ENCODE measurements at regions of chr12 and their contacts with region 1.

Region 1: DNA sequence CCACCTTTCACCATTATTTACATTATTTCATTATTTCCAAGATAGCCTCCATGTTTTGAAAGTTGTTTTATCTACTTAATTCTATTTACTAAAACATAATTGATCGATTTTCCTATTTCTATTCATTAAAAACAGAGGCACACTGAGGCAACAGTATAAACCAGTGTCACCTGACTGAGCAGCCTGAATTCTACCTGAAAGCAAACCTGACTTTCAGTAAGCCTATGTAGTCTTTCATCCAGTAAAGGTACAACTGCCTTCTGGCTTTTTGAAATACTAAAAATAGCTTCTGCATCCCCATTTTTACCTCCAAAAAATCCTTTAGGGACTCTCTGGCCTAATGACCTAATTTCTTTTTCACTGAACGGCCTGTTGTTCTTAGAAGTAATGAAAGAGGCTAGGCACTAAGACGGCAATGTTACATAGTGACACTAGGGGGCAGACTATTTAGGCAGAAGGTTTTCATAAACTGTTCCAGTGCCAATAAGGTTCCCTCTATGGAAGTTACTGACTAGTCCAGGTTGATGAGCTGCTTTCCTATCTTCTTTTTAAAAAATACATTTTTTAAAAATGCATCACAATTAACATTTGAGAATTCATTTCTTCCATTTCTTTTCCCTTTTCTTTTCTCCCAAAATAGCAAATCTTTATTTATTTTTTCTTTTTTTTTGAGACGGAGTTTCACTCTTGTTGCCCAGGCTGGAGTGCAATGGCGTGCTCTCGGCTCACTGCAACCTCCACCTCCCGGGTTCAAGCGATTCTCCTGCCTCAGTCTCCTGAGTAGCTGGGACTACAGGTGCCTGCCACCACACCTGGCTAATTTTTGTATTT is 17.5 kb downstream of the ANAPC5 start:
- DNase-seq: peak; percentile 80
- H3K4me3 Mint-ChIP-seq: no peak overlapping the region
- H3K27ac Mint-ChIP-seq: peak overlapping the region; percentile 51
- H3K4me1 Mint-ChIP-seq: peaks cover 3% of the 10 kb centered on the region
- H3K27me3 Mint-ChIP-seq: no peaks in the 10 kb centered on the region

Region 2: DNA sequence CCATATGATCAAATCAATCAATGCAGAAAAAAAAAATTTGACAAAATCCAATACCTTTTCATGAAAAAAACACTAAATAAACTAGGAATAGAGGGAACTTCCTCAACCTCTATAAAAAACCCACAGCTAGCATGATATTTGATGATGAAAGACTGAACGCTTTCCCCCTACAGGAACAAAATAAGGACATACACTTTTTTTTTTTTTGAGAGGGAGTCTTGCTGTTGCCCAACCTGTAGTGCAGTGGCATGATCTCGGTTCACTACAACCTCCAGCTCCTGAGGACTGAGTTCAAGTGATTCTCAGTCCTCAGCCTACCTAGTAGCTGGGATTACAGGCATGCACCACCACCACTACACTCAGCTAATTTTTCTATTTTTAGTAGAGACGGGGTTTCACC is 20.3 kb before region 1 on chr12:
- intact Hi-C with region 1: no loop called
- DNase-seq: no peak
- H3K4me3 Mint-ChIP-seq: no peak overlapping the region
- H3K27ac Mint-ChIP-seq: no peak overlapping the region
- H3K4me1 Mint-ChIP-seq: peaks cover 14% of the 10 kb centered on the region
- H3K27me3 Mint-ChIP-seq: no peaks in the 10 kb centered on the region

Region 3: DNA sequence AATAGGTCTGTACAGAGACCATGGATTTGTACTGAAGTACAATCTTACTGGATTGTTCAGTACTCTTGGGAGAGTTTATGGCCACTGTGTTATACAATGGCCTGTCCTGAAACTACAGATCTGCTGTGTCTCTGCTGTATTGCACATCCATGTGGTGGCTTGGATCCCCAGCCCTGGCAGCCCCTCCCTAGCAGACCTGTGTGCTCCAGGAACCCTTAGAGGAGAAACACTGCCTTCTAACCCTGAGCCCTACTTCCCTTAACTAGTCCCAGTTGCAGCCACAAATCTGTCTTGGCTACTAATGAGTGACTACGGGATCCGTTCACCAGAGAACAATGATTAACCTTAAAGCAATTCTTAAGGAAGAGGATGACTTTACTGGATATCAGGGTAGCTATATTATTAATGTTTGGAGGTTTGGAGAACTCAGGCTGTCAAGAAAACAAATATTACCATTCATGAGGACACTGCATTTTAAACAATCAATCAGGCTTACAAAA is 92.9 kb after region 1 on chr12:
- intact Hi-C with region 1: loop called (anchors 5 kb)
- DNase-seq: no peak
- H3K4me3 Mint-ChIP-seq: no peak overlapping the region
- H3K27ac Mint-ChIP-seq: no peak overlapping the region
- H3K4me1 Mint-ChIP-seq: no peaks in the 10 kb centered on the region
- H3K27me3 Mint-ChIP-seq: no peaks in the 10 kb centered on the region

Region 4: GRCh38 chr12:121443193-121443870 is 108.6 kb after region 1 on chr12:
- intact Hi-C with region 1: loop called (anchors 1 kb)
- DNase-seq: peak; percentile 89
- H3K4me3 Mint-ChIP-seq: no peak overlapping the region
- H3K27ac Mint-ChIP-seq: peak overlapping the region; percentile 53
- H3K4me1 Mint-ChIP-seq: peaks cover 4% of the 10 kb centered on the region
- H3K27me3 Mint-ChIP-seq: no peaks in the 10 kb centered on the region

Region 5: GRCh38 chr12:121748218-121748570 is 413.5 kb after region 1 on chr12:
- intact Hi-C with region 1: no loop called
- DNase-seq: no peak
- H3K4me3 Mint-ChIP-seq: no peak overlapping the region
- H3K27ac Mint-ChIP-seq: no peak overlapping the region
- H3K4me1 Mint-ChIP-seq: peaks cover 8% of the 10 kb centered on the region
- H3K27me3 Mint-ChIP-seq: no peaks in the 10 kb centered on the region

Measured in activated CD4-positive, alpha-beta T cell treated with anti-CD3 and anti-CD28 coated beads, Interleukin-2, amount 10 ng/mL, durations not matched to agents 24 days and 14 days (primary cell).